Posterior cingulate gyrus (tissue), 11 donors: ENCODE measurements at regions of chr17 and their contacts with region 1.

Region 1: DNA sequence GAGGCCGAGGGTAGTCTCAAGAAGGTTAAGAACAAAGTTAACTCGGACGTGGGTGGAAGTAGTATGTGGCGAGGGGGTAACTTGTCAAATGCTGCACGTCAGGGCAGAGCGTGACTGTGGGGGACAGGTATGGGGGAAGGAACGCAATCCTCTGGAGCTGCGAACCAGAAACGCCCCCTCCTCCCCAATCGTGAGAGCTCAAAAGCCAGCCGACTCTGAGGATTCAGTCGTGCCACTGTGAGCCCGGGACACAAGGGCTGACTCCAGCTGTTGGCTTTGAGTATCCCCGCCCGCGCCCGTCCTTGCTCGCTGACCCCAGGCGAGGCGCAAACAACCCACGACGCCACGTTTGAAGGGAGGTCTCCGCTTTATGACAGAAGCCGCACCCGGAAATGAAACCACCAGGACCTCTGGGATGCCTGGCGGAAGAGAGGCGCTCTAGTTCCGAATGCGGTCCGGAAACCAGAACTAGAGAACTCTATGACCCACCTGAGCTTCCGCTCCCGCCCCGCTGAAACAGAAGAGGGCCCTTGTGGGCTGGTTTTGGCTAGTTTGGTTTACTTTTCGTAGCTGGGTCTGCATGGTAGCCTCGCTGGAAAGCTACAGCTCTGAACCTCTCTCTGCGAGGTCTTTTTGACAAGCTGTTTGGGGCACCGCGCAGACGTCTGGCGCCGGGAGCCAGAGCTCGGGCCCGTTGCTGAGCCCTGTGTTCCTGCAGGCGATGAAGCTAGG is at the start of gene PEX12:
- DNase-seq: peak; percentile 88 to 99 (median 94)

Region 2: DNA sequence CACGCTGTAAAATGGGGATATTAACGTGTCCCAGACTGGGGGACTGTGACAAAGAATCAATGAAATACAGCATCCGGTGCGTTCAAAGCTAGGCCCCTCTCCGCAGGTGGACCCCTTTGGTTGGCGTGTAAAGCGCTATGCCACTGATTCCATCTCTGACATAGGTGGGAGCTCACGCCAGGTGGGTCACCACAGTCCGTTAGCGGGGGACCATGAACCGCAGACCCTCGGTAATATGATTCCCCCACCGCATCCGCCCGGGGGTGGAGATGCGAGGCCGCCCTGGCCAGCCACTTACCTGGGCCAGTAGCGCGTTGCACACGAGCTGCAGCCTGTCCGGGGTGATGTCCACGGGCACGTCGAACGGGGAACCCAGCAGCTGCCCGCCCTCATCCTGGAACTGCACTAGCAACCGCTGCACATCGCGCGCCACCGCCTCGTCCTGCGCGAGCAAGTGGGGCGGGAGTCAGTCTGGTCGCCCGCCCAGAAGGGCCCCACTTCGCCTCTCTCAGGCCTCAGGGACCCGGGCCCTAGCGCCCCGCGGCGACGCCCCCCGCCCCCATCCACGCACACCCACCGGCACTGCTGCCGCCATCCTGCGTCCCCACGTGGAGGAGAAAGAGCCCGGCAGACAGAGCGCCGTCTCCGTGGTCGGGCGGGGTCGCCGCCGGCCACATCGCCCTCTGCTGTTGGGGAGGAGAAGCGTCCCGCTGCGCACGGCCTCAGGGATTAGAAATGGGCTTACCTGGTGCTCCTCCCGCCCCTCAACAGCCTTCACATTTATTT is 436.5 kb before region 1 on chr17 and contains the start of gene NLE1:
- intact Hi-C with region 1: loop called (anchors 10 kb)
- DNase-seq: peak; percentile 74 to 97 (median 86)

Region 3: DNA sequence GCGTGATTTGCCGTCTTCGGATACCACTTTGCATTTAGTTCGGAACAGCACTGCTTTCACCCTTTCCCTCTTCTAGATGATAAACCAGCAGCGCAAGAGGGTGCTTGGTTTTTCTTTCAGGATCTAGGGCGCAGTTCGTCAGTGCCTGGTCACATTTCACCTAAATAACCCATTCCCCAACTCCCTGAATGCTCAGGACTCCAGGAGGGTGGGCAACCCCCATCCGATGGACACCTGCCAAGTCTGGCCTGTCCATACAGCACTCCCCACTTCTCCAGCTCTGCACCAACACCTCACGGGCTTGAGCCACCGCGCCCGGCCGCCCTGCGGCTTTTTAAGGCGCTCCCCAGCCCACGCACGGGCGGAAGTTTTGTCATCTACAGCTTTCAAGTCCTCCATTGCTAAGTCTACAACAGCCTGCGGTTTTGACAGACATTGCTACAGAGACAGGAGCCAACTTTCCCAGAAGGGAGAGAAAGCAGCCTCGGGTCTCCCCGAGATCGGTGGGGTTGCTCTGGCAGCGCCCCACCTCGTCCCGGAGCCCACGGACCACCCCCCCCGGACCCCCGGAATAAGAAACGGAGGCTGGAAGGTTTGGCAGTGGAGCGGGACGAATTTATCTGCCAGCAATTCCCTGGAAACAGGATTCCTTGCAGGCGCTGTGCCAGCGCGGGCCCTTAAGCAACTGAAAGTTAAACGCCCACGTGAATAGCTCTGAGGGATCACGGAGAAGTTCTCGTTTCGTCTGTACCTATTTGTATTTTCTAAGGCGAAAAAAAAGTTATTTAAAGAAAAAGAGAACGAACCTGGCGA is 91.2 kb before region 1 on chr17:
- intact Hi-C with region 1: no loop called
- DNase-seq: no peak

Region 4: GRCh38 chr17:35630530-35631148 is 52.3 kb after region 1 on chr17:
- intact Hi-C with region 1: no loop called
- DNase-seq: no peak

Region 5: DNA sequence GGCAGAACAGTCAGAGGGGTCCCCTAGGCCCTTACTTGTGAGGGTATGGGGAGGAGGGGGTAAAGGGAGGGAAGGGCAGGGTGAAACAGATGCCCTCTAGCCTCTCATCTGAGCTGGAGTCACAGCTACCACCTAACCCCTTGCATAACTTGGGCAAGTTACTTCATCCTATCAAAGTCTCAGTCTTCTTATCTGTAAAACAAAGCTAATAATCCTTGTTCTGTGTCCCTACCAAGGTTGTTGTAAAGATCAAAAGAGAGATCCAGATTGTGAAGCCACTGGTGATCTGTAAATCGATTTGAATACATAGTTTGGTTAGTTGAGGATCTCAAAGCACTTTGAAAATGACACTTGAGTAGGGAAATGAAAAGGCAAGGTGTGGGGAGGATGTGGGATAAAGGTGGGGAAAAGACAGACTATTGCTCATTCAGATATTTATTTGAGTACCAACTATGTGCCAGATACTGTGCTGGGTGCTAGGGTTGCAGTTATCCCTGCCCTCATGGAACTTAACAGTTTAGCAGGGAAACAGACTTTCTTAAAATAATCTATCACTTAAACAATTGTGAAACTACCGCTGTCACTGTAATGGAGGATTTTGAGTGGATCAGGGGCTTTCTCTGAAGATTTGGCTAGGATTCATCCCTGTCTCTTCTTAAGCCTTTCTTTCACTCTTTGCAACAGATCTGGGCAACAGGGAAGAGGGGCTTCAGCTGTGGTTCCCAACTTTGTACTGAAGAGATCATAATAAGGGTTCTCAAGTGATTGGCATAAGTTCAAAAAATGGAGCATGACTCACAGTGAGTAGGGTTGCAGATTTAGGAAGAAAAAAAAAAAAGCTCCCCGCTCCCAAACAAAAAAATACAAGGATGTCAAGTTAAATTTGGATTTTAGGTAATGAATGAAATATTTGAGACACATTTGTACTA is 287.3 kb after region 1 on chr17:
- intact Hi-C with region 1: no loop called
- DNase-seq: no peak